ENCODE measurements at regions of chr12 and their contacts with region 1.

Region 1: DNA sequence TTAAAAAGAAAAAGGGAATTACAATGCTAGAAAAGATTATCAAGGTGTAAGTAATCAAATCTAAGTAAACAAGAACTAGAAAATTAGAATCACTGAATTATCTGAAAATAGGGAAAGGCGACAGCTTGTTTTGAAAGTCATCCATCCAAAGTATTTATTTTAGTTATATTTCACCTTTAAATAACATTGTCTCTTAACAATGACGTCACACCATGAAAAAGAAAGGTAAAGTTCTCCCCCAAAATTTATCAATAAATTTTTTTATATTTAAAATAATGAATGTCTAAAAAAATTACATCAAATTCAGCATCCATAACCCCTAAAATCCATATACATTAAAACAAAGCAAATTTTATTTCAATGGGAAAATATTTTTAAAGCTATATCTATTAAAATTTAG is 223.2 kb downstream of the RERGL start:
- DNase-seq: no peak
- H3K4me3 ChIP-seq: no peak overlapping the region
- CTCF ChIP-seq: no peak
- POLR2A ChIP-seq: no peak

Region 2: DNA sequence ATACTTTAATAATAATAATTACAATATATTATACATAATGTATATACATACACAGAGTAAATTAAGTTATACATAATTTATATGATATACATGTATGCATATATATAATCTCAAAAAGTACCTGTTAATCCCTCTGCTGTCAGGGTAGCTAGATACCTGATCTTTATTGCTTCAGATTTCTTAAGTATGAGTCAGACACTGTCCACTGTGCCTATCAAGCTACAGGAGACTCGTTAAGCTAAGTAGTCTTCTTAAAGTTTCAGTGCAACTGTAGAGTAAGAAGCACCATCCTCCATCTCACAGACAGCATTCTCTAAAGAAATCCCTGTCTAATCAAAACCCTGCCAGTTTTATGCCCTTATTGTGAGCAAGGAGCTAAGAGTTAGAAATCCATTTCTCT is 205.6 kb before region 1 on chr12:
- intact Hi-C with region 1: no loop called
- DNase-seq: no peak
- H3K4me3 ChIP-seq: no peak overlapping the region
- CTCF ChIP-seq: no peak
- POLR2A ChIP-seq: no peak

Region 3: DNA sequence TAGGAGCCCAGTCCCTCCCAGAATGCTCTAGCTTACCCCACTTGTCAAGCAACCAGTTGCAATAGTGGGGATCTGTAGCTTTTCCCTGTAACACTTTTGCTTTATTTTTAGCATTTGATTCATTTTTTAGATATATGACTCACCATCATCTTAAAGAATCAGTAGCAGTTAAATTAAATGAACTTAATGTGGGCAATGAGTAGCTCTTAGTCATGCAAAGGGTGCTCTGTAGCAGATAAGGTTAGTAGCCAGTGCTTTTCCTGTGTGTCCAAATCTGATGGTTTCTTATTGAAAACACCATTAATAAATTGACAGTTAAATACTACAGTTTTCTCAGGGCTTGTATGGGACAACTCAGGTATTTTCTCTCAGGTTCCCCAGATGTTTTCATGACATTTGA is 88.6 kb before region 1 on chr12:
- intact Hi-C with region 1: loop called (anchors 2 kb)
- DNase-seq: no peak
- H3K4me3 ChIP-seq: no peak overlapping the region
- CTCF ChIP-seq: no peak
- POLR2A ChIP-seq: no peak